RWPE1 (cell line): ENCODE measurements at regions of chr10 and their contacts with region 1.

Region 1: DNA sequence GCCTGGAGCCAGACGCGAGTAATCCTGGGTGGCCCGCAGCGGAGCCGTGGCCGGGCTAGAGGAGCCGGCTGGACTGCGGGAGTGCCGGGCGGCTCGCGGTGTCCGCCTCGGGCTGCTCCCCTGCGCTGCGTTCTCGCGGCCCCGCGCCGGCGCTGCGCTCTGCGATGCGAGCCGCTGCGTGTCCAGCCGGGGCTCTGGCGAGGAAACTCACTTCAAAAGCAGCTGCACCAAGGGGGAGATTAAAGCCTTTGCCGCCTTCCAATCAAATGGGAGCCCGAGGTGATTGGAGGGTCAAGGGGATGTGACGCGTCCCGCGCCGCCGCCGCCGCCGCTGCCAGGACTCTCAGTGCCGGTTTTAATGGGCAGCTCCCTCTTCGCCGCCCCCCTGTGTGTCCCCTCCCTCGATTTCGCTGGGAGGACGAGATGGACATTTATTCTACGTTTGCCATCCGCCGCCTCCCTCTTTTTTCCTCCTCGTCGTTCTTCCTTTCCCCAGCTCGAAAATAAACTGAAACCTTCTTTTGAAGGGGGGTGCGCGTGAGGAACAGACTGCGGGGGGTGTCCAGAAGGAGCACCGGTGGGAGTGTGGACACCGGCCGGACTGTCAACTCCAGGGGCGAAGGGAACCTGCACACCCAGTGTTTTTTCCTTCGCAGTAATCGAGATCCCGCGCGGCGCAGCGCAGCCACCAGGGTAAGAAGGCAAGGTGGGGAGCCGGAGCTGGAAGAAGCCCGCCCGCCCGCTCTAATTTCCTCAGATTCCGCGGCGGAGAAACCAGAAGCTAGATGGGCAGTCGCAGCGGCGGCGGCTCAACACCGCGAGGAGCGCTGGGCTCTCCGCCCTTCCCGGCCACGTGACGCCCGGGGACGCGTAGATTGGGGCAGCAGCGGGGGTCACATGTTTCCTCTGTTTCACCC is at the start of gene ZNF503:
- DNase-seq: peak; percentile 97
- H3K27ac ChIP-seq: peak within 1 kb of the TSS; percentile 97
- CTCF ChIP-seq: no peak

Region 2: GRCh38 chr10:75269605-75270004 is 132.2 kb before region 1 on chr10:
- CTCF ChIA-PET with region 1: interaction called, 4 read pairs
- POLR2A ChIA-PET with region 1: interaction called, 12 read pairs
- DNase-seq: no peak
- H3K27ac ChIP-seq: no peak overlapping the region
- CTCF ChIP-seq: no peak

Region 3: GRCh38 chr10:75512203-75512933 is 110.5 kb after region 1 on chr10:
- CTCF ChIA-PET with region 1: no interaction called
- POLR2A ChIA-PET with region 1: no interaction called
- DNase-seq: no peak
- H3K27ac ChIP-seq: no peak overlapping the region
- CTCF ChIP-seq: no peak

Region 4: DNA sequence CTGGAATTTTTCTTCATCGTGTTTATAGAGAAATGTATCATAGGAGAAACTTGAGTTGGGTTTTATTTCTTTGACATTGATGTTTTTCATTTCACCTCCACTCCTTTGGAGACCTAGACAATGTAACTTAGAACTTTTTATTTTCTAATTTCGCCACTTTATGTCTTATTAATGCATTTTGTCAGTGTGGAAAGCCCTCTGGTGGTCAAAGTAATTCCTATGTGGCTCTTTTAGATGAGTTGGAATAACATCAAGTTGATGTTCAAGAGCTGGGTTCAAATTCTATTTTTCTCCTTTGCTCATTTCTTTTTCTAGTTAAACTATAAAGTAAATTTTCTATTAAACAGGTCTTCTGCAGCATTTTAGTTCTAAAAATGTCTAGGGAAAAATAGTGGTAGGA is 508.2 kb after region 1 on chr10:
- CTCF ChIA-PET with region 1: interaction called, 16 read pairs
- POLR2A ChIA-PET with region 1: no interaction called
- DNase-seq: peak; percentile 9
- H3K27ac ChIP-seq: no peak overlapping the region
- CTCF ChIP-seq: peak; percentile 50